Breast epithelium (tissue), 4 donors: ENCODE measurements at regions of chr16 and their contacts with region 1.

Region 1: GRCh38 chr16:67105881-67106280 is 3.9 kb upstream of the PHAF1 start:
- DNase-seq: no peak
- H3K4me3 ChIP-seq: no peak overlapping the region
- H3K27ac ChIP-seq: peak overlapping the region; percentile 53 to 57
- H3K4me1 ChIP-seq: peaks cover 0 to 4% of the 10 kb centered on the region in 2 donors
- H3K27me3 ChIP-seq: no peaks in the 10 kb centered on the region
- CTCF ChIP-seq: no peak
- POLR2A ChIP-seq: no peak

Region 2: DNA sequence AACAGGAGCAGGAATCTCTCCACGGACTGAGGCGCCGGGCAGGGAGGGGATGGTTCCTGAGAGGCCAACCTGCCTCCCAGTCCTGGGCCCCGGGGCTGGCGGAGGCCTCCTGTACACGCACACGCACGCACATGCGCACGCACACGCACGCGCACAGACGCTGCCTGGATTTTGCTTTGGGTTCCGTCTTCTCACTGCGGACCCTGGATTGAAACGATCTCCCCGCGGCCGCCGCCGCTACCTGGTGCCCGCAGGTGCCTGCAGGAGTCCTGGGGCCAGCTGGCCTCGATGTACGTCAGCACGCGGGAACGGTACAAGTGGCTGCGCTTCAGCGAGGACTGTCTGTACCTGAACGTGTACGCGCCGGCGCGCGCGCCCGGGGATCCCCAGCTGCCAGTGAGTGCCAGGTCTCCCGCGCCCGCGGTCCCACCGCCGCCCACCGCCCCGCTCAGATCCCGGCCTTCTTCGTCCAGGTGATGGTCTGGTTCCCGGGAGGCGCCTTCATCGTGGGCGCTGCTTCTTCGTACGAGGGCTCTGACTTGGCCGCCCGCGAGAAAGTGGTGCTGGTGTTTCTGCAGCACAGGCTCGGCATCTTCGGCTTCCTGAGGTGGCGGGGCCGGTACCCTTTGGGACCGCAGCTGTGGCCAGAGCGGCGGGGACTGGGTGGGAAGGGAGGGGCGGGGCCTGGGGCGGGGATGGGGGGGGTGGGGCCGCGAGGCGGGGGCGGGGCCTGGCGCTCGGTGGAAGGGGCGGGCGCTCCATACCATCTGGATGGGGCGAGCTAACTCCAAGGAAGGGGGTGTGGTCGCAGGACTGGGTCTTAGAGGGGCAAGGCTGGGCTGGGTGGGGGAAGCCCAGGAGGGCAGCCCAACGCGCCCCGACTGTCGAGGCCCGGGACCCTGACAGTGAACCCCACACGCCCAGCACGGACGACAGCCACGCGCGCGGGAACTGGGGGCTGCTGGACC is 105.2 kb before region 1 on chr16:
- intact Hi-C with region 1: no loop called
- DNase-seq: peak; percentile 50 to 62
- H3K4me3 ChIP-seq: peak overlapping the region; percentile 39 to 67 (median 62)
- H3K27ac ChIP-seq: peak overlapping the region; percentile 48 to 54
- H3K4me1 ChIP-seq: peaks cover 0 to 3% of the 10 kb centered on the region in 2 donors
- H3K27me3 ChIP-seq: no peaks in the 10 kb centered on the region
- CTCF ChIP-seq: no peak
- POLR2A ChIP-seq: no peak

Region 3: GRCh38 chr16:67029249-67030096 is 76.4 kb before region 1 on chr16:
- intact Hi-C with region 1: loop called (anchors 2 kb)
- DNase-seq: peak; percentile 37 to 62
- H3K4me3 ChIP-seq: peak overlapping the region; percentile 90 to 100 (median 96)
- H3K27ac ChIP-seq: peak overlapping the region; percentile 96 to 100
- H3K4me1 ChIP-seq: peaks cover 5 to 8% of the 10 kb centered on the region in 2 donors
- H3K27me3 ChIP-seq: no peaks in the 10 kb centered on the region
- CTCF ChIP-seq: no peak
- POLR2A ChIP-seq: no peak

Region 4: DNA sequence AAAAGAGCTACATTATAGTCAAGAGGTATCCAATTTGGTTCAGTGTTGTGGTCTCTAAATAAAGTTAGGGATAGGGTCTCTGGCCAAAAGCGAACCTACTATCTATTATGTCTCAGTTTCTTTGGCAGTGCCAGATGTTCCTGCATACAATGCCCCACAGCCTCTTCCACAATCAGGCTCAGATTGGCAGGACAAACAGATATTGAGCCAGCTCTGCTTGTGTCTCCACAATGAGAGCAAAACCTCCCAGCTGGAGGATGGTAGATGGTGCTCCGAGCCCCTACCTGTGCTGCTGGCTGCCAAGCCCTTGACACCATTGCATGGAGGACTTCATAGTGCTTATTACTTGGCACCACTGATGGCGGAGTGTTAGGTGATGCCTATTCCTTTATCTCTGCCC is 23.5 kb after region 1 on chr16:
- intact Hi-C with region 1: no loop called
- DNase-seq: no peak
- H3K4me3 ChIP-seq: no peak overlapping the region
- H3K27ac ChIP-seq: no peak overlapping the region
- H3K4me1 ChIP-seq: no peaks in the 10 kb centered on the region
- H3K27me3 ChIP-seq: no peaks in the 10 kb centered on the region
- CTCF ChIP-seq: no peak
- POLR2A ChIP-seq: no peak